ENCODE measurements at regions of chr4 and their contacts with region 1.

Region 1: GRCh38 chr4:74084984-74085383 is 14.0 kb downstream of the CXCL2 start:
- DNase-seq: no peak
- H3K4me3 ChIP-seq: no peak overlapping the region
- H3K27ac ChIP-seq: no peak overlapping the region
- H3K4me1 ChIP-seq: no peaks in the 10 kb centered on the region
- H3K27me3 ChIP-seq: no peaks in the 10 kb centered on the region
- CTCF ChIP-seq: no peak

Region 2: DNA sequence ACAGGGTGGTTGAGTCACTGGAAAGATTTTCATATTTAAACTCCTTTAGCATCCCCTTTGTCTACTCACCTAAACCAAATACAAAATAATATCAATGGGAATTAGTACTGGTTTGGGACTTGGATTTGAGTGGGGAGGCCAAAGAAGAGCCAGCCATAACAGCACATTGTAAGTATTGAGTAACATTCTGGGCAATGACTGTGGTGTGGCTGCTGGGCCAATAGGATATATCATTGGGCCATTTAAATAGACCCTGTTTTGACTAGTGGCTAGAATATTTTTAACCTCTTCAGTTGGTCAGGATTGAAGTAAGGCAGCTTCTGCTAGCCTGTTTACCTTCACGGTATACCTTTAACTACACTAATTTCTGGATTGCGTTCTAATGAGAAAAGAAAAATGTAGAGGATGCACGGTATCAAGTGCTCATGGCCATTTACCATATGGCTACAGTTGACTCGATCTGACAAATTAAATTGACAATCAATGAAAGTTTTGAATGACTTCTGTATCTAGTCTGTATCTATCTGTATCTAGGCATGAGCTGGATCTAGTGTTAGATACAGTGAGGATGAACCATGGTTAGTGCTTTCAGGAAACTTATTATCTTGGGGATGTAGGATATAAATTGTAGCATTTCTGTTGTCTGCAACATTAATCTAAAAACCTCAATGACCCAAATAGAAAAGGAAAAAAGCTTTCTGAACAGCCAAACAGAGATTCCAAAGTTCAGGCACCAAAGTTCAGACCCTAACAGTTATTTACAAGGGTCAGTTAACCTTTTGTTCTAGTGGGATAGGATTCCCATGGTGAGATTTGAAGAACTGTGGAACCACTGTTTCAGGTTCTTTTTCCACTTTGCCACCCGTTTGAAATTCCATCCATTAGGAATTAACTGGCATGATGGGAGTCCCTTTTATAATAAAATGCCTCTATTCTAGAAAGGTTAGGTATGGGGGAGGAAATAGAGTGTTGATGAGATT is 687.7 kb before region 1 on chr4:
- intact Hi-C with region 1: no loop called
- DNase-seq: no peak
- H3K4me3 ChIP-seq: no peak overlapping the region
- H3K27ac ChIP-seq: no peak overlapping the region
- H3K4me1 ChIP-seq: no peaks in the 10 kb centered on the region
- H3K27me3 ChIP-seq: no peaks in the 10 kb centered on the region
- CTCF ChIP-seq: no peak

Region 3: GRCh38 chr4:73499996-73500765 is 584.8 kb before region 1 on chr4:
- intact Hi-C with region 1: loop called (anchors 5 kb)
- DNase-seq: no peak
- H3K4me3 ChIP-seq: no peak overlapping the region
- H3K27ac ChIP-seq: no peak overlapping the region
- H3K4me1 ChIP-seq: no peaks in the 10 kb centered on the region
- H3K27me3 ChIP-seq: no peaks in the 10 kb centered on the region
- CTCF ChIP-seq: no peak

Region 4: GRCh38 chr4:73603271-73603710 is 481.7 kb before region 1 on chr4:
- intact Hi-C with region 1: no loop called
- DNase-seq: no peak
- H3K4me3 ChIP-seq: no peak overlapping the region
- H3K27ac ChIP-seq: no peak overlapping the region
- H3K4me1 ChIP-seq: no peaks in the 10 kb centered on the region
- H3K27me3 ChIP-seq: peaks cover 2% of the 10 kb centered on the region
- CTCF ChIP-seq: no peak

Measured in left ventricle myocardium inferior (tissue), 1 donor.